BJ (cell line): ENCODE measurements at regions of chr3 and their contacts with region 1.

Region 1: DNA sequence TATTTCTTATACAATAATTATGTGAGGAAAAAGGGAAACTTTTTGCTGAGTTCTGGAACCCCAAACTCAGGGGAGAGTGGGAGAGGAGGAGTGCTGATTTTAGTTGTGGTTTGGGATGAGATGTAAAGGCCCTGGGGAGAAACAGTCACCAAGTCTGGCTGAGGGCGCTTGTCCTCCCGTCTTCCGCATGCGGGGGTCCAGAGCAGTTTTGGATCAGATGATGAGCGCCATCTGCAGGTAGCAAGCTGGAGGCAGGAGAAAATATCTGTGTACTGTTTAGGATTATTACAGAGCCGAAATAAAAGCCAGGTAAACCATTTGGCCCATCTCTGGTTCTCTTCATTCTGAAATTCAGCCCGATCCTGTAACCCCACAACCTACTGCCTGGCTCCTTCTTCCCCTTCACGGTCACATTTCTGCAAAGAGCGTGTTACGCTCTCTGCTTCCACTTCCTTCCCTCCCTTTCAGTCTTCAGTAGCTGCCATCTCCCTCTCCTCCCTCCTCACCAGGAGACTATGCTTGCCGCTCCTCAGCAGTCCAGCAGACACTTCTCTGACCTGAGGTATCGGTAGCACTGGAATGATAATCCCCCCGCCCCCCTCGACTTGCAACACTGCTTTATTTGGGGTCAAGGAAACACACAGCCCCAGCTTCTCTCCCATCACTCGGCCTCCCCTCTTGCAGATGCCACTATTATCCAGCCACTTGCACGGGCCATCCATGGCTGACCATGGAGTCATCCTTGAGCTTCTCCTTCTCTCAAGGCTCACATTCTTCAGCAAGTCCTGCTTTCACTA is 1.4 kb upstream of the PARP14 start:
- DNase-seq: no peak
- H3K4me3 ChIP-seq: no peak overlapping the region
- H3K27me3 ChIP-seq: no peaks in the 10 kb centered on the region
- CTCF ChIP-seq: peak; percentile 86

Region 2: GRCh38 chr3:122458992-122459391 is 220.3 kb before region 1 on chr3:
- CTCF ChIA-PET with region 1: interaction called, 28 read pairs
- POLR2A ChIA-PET with region 1: no interaction called
- DNase-seq: peak; percentile 6
- H3K4me3 ChIP-seq: no peak overlapping the region
- H3K27me3 ChIP-seq: no peaks in the 10 kb centered on the region
- CTCF ChIP-seq: peak; percentile 51

Region 3: DNA sequence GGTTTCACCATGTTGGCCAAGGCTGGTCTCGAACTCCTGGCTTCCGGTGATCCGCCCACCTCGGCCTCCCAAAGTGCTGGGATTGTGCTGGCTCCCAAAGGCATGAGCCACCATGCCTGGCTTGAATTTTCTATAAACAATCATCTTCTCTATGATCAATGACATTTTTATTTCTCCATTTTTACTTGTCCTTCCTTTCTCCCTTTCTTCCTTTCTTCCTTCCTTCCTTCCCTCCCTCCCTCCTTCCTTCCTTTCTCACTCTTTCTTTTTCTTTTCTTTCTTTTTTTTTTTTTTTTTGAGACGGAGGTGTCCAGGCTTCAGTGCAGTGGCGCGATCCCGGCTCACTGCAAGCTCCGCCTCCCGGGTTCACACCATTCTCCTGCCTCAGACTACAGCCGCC is 156.0 kb before region 1 on chr3:
- CTCF ChIA-PET with region 1: no interaction called
- POLR2A ChIA-PET with region 1: no interaction called
- DNase-seq: no peak
- H3K4me3 ChIP-seq: no peak overlapping the region
- H3K27me3 ChIP-seq: no peaks in the 10 kb centered on the region
- CTCF ChIP-seq: no peak

Region 4: GRCh38 chr3:122608916-122609315 is 70.4 kb before region 1 on chr3:
- CTCF ChIA-PET with region 1: no interaction called
- POLR2A ChIA-PET with region 1: interaction called, 15 read pairs
- DNase-seq: no peak
- H3K4me3 ChIP-seq: no peak overlapping the region
- H3K27me3 ChIP-seq: no peaks in the 10 kb centered on the region; the same call in 1 of the 2 replicates
- CTCF ChIP-seq: no peak

Region 5: GRCh38 chr3:122689587-122689986 is 10.3 kb after region 1 on chr3:
- CTCF ChIA-PET with region 1: interaction called, 16 read pairs
- POLR2A ChIA-PET with region 1: no interaction called
- DNase-seq: no peak
- H3K4me3 ChIP-seq: no peak overlapping the region
- H3K27me3 ChIP-seq: no peaks in the 10 kb centered on the region
- CTCF ChIP-seq: no peak